SK-N-SH (cell line): ENCODE measurements at regions of chr14 and their contacts with region 1.

Region 1: DNA sequence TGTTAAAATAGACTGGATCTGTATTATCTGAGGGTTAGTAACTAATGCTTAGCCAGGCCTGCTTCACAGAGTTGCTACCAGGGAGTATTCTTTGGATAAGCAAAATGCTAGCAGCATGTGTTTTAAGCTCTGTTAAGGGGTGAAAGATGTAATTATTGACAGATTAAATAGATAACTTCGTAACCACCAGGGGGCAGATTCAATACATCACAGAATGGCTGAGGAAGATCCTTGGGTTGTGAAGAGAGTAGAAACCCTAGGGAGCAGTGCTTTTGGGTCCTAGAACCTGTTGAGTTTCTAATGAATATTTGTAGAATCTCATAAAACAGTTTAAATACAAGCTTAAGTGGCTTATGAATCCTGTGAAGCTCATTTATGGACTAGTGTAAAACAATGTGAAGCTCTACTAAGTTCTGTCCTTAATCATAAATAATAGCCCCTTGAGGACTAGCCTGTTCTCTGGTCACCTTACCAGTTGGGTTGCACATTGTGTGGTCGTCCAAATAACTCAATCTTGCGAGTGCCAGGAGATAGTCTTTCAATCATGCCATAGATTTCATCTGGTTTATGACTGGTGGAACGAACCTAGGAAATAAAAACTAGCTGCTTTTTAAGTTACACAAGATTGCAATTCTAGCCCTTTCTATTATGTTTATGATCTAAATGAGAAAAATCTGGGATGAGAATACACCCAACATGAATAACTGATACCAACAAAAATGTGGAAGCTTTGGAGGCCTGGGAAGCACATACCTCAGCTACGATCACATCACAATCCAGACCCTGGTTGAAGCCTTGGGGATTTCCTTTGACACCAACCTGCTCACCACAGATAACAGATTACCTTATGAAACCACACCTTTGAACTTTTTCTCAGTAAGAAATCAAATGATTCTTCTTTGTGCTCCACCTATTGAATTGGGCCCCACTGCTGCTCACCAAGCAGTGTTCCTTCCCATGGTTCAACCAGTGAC is 12.3 kb downstream of the METTL3 start:
- DNase-seq: peak; percentile 51
- H3K4me3 ChIP-seq: no peak overlapping the region
- H3K27ac ChIP-seq: peak overlapping the region; percentile 25 to 48; a peak in 3 of 4 replicates
- H3K4me1 ChIP-seq: peaks cover 6 to 10% of the 10 kb centered on the region in 2 experiments; a peak in 2 of 4 replicates
- H3K27me3 ChIP-seq: no peaks in the 10 kb centered on the region
- CTCF ChIP-seq: peak; percentile 71
- EP300 ChIP-seq: no peak
- RAD21 ChIP-seq: peak; percentile 63

Region 2: DNA sequence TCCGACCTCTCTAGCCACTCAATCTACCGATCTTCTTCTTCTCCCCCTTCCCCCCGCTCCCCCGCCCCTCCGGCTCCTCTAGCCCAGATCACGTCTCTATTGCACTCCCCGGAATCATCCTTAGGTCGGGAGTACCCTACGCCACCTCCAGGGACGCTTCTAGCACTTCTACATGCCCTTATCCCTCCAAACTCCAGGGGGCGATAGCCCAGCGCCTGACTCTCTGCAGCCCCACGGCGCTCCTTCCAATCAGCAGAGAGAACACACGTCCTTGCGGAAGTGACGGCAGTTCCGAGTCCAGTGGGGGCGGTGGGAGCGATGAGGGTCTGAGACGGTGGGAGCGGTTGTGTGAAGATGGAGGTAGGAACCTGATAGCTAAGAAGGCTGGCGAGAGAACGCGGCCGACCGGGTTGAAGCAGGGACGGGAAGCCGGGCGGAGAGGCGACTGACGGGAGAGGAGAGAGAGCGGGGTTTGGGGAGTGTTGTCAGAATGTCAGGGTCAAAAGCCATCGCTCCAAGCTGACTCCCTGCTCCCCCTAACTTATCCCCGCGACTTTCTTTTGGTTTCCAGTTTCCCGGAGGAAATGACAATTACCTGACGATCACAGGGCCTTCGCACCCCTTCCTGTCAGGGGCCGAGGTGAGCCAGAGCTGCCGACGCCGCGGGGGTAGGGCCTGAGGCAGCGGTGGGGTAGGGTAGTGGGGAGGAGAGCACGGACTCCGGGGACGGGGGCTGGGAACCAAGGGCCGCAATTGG is 21.7 kb before region 1 on chr14 and contains the starts of genes RAB2B and TOX4:
- CTCF ChIA-PET with region 1: interaction called, 40 read pairs
- POLR2A ChIA-PET with region 1: interaction called, 4 read pairs
- DNase-seq: peak; percentile 93
- H3K4me3 ChIP-seq: peak within 1 kb of the TSS; percentile 85 to 99
- H3K27ac ChIP-seq: peak within 1 kb of the TSS; percentile 78 to 86
- H3K4me1 ChIP-seq: peaks cover 4 to 6% of the 10 kb centered on the region in 2 experiments; a peak in 2 of 4 replicates
- H3K27me3 ChIP-seq: no peaks in the 10 kb centered on the region
- CTCF ChIP-seq: peak; percentile 91
- EP300 ChIP-seq: no peak
- RAD21 ChIP-seq: no peak
- polyA plus RNA-seq, gene RAB2B: 24.4 and 41.2 TPM in 2 replicates
- polyA plus RNA-seq, gene TOX4: 52.3 and 69.3 TPM in 2 replicates

Region 3: DNA sequence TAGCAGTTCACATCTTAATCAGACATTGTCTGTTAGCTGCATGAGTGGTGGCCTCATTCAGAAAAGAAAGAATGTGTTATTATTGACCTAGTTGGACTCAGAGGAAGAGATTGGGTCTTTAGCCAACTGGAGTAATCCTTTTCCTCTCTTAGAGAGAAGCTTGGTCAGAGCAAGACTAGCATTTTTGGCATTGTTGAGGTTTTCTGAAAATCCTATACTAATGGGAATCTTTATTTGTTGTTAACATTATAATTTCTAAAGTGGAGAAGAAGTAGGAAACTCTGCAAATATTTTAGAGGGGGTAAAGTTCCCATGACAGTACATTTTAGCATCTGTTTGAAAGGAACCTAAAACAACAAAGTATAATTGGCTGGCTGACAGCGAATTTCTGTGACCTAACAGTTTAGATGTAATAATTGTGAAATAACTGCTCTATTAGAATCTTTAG is 12.2 kb before region 1 on chr14:
- CTCF ChIA-PET with region 1: interaction called, 12 read pairs
- POLR2A ChIA-PET with region 1: no interaction called
- DNase-seq: no peak
- H3K4me3 ChIP-seq: no peak overlapping the region
- H3K27ac ChIP-seq: peak overlapping the region in 1 of 2 experiments; percentile 51; a peak in 2 of 4 replicates
- H3K4me1 ChIP-seq: no peaks in the 10 kb centered on the region
- H3K27me3 ChIP-seq: no peaks in the 10 kb centered on the region
- CTCF ChIP-seq: no peak
- EP300 ChIP-seq: no peak
- RAD21 ChIP-seq: no peak

Region 4: DNA sequence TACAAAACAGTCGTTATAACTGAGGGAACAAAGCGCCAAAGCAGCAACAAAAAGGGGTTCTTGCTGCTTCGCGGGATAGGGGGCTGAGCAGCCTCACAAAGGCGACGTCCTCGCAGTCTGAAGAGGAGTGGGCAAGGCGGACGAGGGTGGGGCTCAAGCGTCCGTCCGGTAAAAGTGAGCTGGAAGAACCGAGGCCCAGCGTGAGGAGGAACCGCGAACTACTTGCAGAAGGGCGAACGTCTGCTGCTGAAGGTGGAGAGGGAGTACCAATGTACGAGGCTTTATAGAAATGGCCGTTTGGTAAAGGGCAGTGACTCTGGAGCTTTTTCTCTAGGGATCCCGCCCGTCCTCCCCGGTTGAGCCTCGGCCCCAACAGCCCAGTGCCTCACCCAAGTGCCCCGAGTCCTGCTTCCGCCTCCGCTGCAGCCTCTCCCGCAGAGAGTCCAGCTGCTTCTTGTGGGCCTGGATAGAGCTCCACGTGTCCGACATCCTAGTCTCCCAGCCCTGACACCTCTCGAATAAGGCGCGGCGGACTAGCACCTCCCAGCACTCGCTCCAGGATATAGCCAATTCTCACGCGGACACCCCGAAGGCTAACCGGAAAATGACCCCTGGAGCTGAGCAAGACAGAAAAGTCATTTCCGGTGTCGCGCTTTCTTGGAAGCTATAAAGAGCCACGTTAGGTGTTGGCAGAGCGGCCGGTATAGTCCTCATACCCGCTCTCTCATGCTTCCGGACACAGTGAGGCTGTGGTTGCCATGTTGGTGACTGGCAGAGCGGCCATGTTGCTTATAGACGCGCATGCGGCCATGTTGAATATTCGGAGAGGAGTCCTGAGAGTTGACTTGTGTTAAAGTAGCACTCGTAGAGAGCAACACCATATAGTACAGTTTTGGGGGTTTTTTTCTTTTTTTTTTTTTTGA is 12.2 kb after region 1 on chr14 and contains the start of gene METTL3:
- CTCF ChIA-PET with region 1: interaction called, 49 read pairs
- POLR2A ChIA-PET with region 1: interaction called, 12 read pairs
- DNase-seq: peak; percentile 85
- H3K4me3 ChIP-seq: peak within 1 kb of the TSS; percentile 78 to 89
- H3K27ac ChIP-seq: peak within 1 kb of the TSS; percentile 78 to 84
- H3K4me1 ChIP-seq: peaks cover 0 to 9% of the 10 kb centered on the region in 2 experiments; a peak in 3 of 4 replicates
- H3K27me3 ChIP-seq: no peaks in the 10 kb centered on the region
- CTCF ChIP-seq: no peak
- EP300 ChIP-seq: no peak
- RAD21 ChIP-seq: no peak
- polyA plus RNA-seq, gene METTL3: 118 and 198 TPM in 2 replicates

Region 5: GRCh38 chr14:21525962-21526671 is 27.3 kb after region 1 on chr14 and contains the start of gene SALL2:
- CTCF ChIA-PET with region 1: interaction called, 15 read pairs
- POLR2A ChIA-PET with region 1: no interaction called
- DNase-seq: peak; percentile 93
- H3K4me3 ChIP-seq: peak within 1 kb of the TSS; percentile 75 to 77
- H3K27ac ChIP-seq: peak within 1 kb of the TSS in 1 of 2 experiments; percentile 82; a peak in 2 of 4 replicates
- H3K4me1 ChIP-seq: peaks cover 0 to 16% of the 10 kb centered on the region in 2 experiments; a peak in 1 of 4 replicates
- H3K27me3 ChIP-seq: peaks cover 6% of the 10 kb centered on the region; the same call in 1 of the 2 replicates
- CTCF ChIP-seq: no peak
- EP300 ChIP-seq: no peak
- RAD21 ChIP-seq: no peak
- polyA plus RNA-seq, gene SALL2: 7.5 and 9.1 TPM in 2 replicates

Region 6: DNA sequence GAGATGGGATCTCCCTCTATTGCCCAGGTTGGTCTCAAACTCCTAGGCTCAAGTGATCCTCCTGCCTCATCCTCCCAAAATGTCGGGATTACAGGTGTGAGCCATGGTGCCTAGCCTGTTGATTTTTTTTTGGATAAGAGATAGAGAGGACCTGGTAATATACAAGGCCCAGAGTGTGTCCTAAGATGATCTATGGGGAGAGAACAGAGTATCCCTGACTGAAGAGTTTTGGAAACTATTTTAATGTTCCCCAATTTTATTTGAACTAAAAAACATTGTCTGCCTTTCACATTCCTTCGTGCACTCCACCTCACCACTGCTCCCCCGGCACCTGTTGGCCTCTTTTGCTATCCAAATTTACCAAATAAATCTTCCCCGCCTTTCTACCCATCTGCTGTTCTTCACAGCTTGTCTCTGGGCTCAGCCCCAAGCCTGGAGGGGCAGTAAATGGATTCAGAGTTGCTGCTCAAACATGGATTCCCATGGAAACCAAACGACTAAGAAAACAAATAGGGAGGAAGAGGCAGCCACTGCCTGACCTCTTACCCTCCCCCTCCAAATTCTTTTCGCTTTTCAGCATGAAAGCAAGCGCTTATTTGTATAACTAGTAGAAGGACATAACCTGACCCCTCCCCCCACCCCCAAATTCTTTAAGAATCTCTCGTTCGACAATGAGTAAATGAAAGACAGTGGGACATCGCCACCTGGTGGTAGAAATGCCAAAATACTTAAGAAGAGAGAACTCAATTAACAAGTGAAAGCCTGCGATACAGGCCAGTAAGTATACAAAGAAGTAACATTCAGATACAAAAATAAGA is 58.5 kb after region 1 on chr14:
- CTCF ChIA-PET with region 1: interaction called, 27 read pairs
- POLR2A ChIA-PET with region 1: interaction called, 3 read pairs
- DNase-seq: peak; percentile 65
- H3K4me3 ChIP-seq: peak overlapping the region; percentile 32 to 57
- H3K27ac ChIP-seq: peak overlapping the region in 1 of 2 experiments; percentile 4; a peak in 1 of 4 replicates
- H3K4me1 ChIP-seq: no peaks in the 10 kb centered on the region; a peak in 1 of 4 replicates
- H3K27me3 ChIP-seq: no peaks in the 10 kb centered on the region
- CTCF ChIP-seq: peak; percentile 81
- EP300 ChIP-seq: no peak
- RAD21 ChIP-seq: peak; percentile 87